ENCODE measurements at regions of chr7 and their contacts with region 1.

Region 1: DNA sequence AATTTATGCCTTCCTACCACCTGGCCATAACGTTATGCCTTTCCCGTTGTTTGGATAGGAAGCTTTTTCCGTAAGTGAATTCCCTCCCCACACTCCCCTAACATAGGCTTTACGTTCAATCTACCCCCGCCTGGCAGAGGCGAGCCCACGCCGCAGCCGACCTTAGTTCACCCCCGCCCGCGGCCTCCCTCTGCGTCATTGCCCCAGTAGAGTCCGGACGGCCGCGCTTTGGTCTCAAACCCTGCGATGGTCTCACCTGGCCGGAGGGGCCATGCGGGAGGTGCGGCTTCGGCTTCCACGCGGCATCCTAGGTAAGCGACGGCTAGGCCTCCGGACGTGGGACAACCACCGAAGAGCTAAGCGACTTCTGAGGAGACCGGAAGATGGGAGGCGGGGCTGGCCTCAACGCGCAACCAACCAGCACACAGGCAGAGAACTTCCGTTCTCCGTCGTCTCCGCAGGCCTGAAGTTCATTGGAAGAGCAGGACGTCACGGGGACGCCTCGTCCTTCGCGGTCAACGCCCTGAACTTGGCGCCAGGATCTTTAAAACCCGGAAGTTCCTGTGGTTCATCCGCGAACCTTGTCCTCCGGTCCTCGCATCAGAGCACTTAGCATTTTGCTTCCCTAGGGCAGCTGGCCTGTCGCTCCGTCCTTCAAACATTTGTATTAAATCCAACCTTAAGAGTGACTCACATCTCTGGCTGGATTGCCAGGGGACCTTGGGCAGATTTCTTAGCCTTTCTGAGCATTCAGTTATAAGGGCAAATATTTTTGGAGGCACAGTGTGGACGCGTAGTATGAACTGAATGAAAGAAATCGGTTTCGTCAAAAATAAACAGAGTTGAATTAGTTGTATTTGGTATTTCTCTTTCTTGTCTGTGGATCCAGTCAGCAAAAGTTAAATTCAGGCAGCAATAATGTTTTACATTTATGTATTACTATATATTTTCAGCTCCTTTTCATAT is at the start of gene CHCHD2:
- DNase-seq: peak; percentile 97
- H3K4me3 ChIP-seq: peak within 1 kb of the TSS; percentile 72 to 89 (median 78)
- H3K27ac ChIP-seq: peak within 1 kb of the TSS; percentile 89 to 96 (median 94)
- H3K4me1 ChIP-seq: peaks cover 12 to 41% (median 33%) of the 10 kb centered on the region in 6 donors
- H3K27me3 ChIP-seq: no peaks in the 10 kb centered on the region
- CTCF ChIP-seq: no peak
- POLR2A ChIP-seq: peak; percentile 37 to 66 (median 64)
- total RNA-seq, gene CHCHD2: 192 to 371 (median 228) TPM

Region 2: DNA sequence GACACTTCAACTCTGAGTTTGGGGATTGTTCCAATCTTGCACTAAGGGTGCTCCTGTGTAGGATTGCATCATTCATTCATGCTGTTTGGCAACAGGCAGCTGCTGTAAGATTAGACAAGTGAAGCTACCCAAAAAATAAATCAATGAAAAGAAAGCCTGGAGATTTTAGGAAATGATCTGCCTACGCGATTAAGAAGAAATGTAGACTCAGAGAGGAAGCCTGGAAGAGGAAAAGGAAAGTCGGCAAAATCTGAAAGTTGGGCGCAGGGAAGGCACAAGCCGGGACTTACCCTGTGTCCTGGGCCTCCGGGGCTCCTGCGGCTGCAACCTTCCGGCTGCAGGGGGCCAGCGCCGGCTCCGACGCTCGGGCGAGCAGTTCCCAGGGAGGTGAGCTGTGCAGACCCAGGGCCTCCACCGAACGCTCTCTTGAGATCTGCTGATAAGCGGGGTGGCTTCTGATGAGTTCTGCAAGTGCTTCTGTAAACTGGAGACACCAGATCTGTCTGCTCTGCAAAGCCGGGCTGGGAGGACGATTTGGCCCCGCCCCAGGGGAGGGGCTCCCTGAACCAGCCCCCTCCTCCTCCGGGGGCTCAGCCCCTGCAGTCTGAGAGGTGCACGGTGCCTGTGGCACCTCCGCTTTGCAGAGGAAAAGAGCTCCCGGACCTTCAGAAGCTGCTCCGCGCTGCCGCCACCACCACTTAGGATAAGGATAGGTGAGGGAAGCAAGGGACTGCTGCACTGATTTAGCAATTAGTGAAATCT is 72.5 kb before region 1 on chr7:
- intact Hi-C with region 1: no loop called
- DNase-seq: peak; percentile 91
- H3K4me3 ChIP-seq: peak overlapping the region; percentile 57 to 81 (median 66)
- H3K27ac ChIP-seq: peak overlapping the region in 6 of 8 donors; percentile 14 to 80 (median 54)
- H3K4me1 ChIP-seq: peaks cover 0 to 19% (median 10%) of the 10 kb centered on the region in 6 donors
- H3K27me3 ChIP-seq: no peaks in the 10 kb centered on the region
- CTCF ChIP-seq: peak in 6 of 11 experiments; percentile 12 to 48 (median 32)
- POLR2A ChIP-seq: no peak

Region 3: DNA sequence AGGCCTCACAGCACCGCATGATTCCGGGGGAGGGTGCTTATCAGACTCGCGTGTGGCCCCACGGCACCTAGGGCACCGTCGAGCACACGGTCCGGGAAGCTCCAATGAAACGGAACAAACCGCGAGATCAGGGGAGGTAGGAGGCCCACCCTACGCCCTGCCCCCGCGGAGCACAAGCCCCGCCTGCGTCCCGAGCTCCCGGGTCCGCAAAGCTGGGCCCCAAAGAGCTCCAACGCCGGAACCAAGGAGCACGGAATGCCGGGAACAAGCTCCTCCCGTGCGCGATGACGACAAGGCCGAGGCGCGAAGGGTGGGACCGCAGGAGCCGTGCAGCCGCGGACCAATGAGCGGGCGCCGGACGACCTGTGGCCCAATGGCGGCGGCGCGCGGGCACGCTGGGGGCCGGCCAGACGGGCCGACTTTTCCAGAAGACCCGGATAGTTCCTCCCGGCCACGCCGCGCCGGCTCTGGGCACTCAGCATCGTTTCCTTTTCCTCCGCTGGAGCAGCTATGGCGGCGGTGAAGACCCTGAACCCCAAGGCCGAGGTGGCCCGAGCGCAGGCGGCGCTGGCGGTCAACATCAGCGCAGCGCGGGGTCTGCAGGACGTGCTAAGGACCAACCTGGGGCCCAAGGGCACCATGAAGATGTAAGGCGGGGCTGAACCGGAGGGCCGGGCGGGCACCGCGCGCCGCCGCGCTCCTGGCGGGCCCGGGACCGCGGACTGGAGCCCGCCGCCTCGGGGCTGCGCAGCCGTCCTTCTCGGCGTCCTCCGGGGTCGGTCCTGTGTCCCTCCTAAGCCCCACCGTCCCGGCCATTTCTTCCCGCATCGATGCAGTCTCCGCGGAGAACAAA is 54.8 kb before region 1 on chr7 and contains the starts of genes CCT6A and PSPH:
- intact Hi-C with region 1: loop called (anchors 10 kb)
- DNase-seq: peak; percentile 98
- H3K4me3 ChIP-seq: peak within 1 kb of the TSS; percentile 69 to 99 (median 84)
- H3K27ac ChIP-seq: peak within 1 kb of the TSS; percentile 76 to 94 (median 91)
- H3K4me1 ChIP-seq: peaks cover 12 to 58% (median 47%) of the 10 kb centered on the region in 6 donors
- H3K27me3 ChIP-seq: no peaks in the 10 kb centered on the region
- CTCF ChIP-seq: peak in 1 of 11 experiments; percentile 37
- POLR2A ChIP-seq: peak in 2 of 3 donors; percentile 9 to 52
- total RNA-seq, gene CCT6A: 71.5 to 107 (median 84.9) TPM
- total RNA-seq, gene PSPH: 5.0 to 11.3 (median 7.3) TPM

Region 4: GRCh38 chr7:57216340-57216739 is 1109.9 kb after region 1 on chr7:
- intact Hi-C with region 1: no loop called
- DNase-seq: peak; percentile 41
- H3K4me3 ChIP-seq: no peak overlapping the region
- H3K27ac ChIP-seq: no peak overlapping the region
- H3K4me1 ChIP-seq: no peaks in the 10 kb centered on the region
- H3K27me3 ChIP-seq: no peaks in the 10 kb centered on the region
- CTCF ChIP-seq: no peak
- POLR2A ChIP-seq: no peak